CD8-positive, alpha-beta T cell (primary cell): ENCODE measurements at regions of chr2 and their contacts with region 1.

Region 1: GRCh38 chr2:8681786-8682692 is at the start of gene ID2:
- DNase-seq: peak; percentile 96 to 100 (median 99)
- ATAC-seq: peak; percentile 74
- H3K4me3 ChIP-seq: peak within 1 kb of the TSS; percentile 89 to 94
- H3K4me3 Mint-ChIP-seq: peak within 1 kb of the TSS; percentile 99
- H3K27ac ChIP-seq: peak within 1 kb of the TSS; percentile 80 to 82
- H3K27ac Mint-ChIP-seq: peak within 1 kb of the TSS; percentile 97
- H3K4me1 ChIP-seq: peaks cover 40% of the 10 kb centered on the region
- H3K4me1 Mint-ChIP-seq: peaks cover 45% of the 10 kb centered on the region
- H3K27me3 ChIP-seq: peaks cover 3 to 9% of the 10 kb centered on the region in 2 experiments
- H3K27me3 Mint-ChIP-seq: peaks cover 15% of the 10 kb centered on the region
- CTCF ChIP-seq: no peak
- total RNA-seq, gene ID2: 290 to 298 TPM

Region 2: GRCh38 chr2:7097348-7097895 is 1584.6 kb before region 1 on chr2:
- CTCF ChIA-PET with region 1: interaction called, 7 read pairs
- POLR2A ChIA-PET with region 1: interaction called, 3 read pairs
- intact Hi-C with region 1: loop called in 1 of 2 experiments (anchors 1 kb)
- DNase-seq: peak; percentile 60 to 87 (median 74)
- ATAC-seq: peak; percentile 90
- H3K4me3 ChIP-seq: peak overlapping the region; percentile 35 to 51
- H3K4me3 Mint-ChIP-seq: peak overlapping the region; percentile 78
- H3K27ac ChIP-seq: no peak overlapping the region
- H3K27ac Mint-ChIP-seq: no peak overlapping the region
- H3K4me1 ChIP-seq: peaks cover 6% of the 10 kb centered on the region
- H3K4me1 Mint-ChIP-seq: peaks cover 4% of the 10 kb centered on the region
- H3K27me3 ChIP-seq: no peaks in the 10 kb centered on the region
- H3K27me3 Mint-ChIP-seq: no peaks in the 10 kb centered on the region
- CTCF ChIP-seq: peak; percentile 99

Region 3: DNA sequence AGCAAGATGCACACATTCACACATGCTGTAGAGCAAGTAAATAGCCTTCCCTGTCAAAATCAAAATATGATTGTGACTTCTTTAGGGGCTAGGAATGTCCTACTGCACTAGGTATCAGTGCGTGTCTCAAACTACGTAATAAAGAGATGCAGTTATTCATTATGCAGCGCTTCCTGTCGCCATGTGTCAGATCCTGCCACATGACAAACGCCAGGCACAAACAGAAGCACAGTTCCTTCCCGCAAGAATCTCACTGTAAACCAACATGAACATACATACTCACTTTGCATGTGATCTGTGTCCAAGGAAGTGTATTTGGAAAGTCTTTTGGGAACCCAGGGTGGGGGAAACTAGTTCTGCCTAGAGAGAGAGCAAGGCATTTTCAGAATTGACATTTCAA is 1165.0 kb before region 1 on chr2:
- CTCF ChIA-PET with region 1: no interaction called
- POLR2A ChIA-PET with region 1: no interaction called
- intact Hi-C with region 1: loop called in 1 of 2 experiments (anchors 5 kb)
- DNase-seq: peak in 8 of 9 experiments; percentile 4 to 83 (median 50)
- ATAC-seq: peak; percentile 95
- H3K4me3 ChIP-seq: peak overlapping the region in 1 of 2 experiments; percentile 23
- H3K4me3 Mint-ChIP-seq: peak overlapping the region; percentile 69
- H3K27ac ChIP-seq: peak overlapping the region; percentile 44 to 61
- H3K27ac Mint-ChIP-seq: peak overlapping the region; percentile 93
- H3K4me1 ChIP-seq: peaks cover 48% of the 10 kb centered on the region
- H3K4me1 Mint-ChIP-seq: peaks cover 58% of the 10 kb centered on the region
- H3K27me3 ChIP-seq: no peaks in the 10 kb centered on the region
- H3K27me3 Mint-ChIP-seq: no peaks in the 10 kb centered on the region
- CTCF ChIP-seq: no peak

Region 4: DNA sequence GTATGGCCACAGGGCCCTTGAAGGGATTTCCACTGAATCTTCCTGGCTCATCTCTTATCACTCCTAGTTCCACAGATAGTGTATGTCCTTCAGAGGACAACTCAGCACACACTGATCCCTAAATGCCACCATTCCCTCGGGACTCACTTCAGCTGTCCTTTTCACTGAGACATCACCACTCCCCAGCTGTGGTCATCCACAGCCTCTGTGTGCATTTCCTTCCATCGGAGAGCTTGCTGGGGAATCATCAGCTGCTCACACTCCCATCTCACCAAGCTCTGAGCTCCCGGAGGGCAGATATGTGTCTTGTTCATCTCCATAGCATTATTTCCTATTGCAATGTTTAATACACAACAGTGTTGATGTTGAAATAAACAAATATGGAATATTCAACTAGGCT is 1005.3 kb before region 1 on chr2:
- CTCF ChIA-PET with region 1: no interaction called
- POLR2A ChIA-PET with region 1: no interaction called
- intact Hi-C with region 1: no loop called
- DNase-seq: no peak
- ATAC-seq: no peak
- H3K4me3 ChIP-seq: no peak overlapping the region
- H3K4me3 Mint-ChIP-seq: no peak overlapping the region
- H3K27ac ChIP-seq: no peak overlapping the region
- H3K27ac Mint-ChIP-seq: no peak overlapping the region
- H3K4me1 ChIP-seq: peaks cover 18% of the 10 kb centered on the region
- H3K4me1 Mint-ChIP-seq: peaks cover 26% of the 10 kb centered on the region
- H3K27me3 ChIP-seq: no peaks in the 10 kb centered on the region
- H3K27me3 Mint-ChIP-seq: no peaks in the 10 kb centered on the region
- CTCF ChIP-seq: no peak

Region 5: DNA sequence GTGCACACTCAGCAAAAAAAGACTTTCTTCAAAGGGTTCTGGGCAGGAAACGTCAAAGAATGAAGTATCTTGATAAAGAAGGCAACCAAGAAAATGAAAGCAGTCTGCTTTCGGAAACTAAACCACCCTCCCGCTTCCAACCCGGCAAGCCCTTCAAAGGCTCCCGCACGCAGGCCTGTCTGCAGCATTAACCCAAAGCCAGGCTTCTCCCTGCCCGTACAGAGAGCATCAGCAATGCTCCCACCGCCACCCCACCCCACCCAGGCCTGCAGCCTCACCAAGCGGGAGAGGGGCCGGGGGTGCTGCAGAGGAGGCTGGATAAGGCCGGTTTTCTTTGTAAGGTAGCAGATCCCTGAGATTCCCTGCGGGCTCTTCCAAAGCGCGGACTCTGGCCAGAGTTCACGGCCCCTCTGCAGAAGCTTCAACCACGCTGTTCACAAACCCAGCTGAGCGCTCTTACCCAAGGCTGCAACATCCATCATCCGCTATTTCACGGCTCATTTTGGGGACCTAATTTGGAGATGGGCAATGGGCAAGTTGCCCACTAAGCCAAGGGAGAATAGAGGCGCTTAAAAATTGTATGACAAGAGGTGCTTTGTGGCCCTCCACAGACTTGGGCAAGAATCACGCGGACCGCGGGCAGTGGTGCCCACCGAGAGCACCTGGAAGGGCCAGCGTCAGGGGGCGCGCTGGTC is 225.7 kb before region 1 on chr2:
- CTCF ChIA-PET with region 1: no interaction called
- POLR2A ChIA-PET with region 1: interaction called, 3 read pairs
- intact Hi-C with region 1: loop called (anchors 2 to 5 kb)
- DNase-seq: peak in 7 of 9 experiments; percentile 32 to 77 (median 59)
- ATAC-seq: peak; percentile 70
- H3K4me3 ChIP-seq: peak overlapping the region; percentile 36 to 40
- H3K4me3 Mint-ChIP-seq: peak overlapping the region; percentile 86
- H3K27ac ChIP-seq: peak overlapping the region in 1 of 2 experiments; percentile 80
- H3K27ac Mint-ChIP-seq: peak overlapping the region; percentile 86
- H3K4me1 ChIP-seq: peaks cover 20% of the 10 kb centered on the region
- H3K4me1 Mint-ChIP-seq: peaks cover 29% of the 10 kb centered on the region
- H3K27me3 ChIP-seq: no peaks in the 10 kb centered on the region
- H3K27me3 Mint-ChIP-seq: peaks cover 16% of the 10 kb centered on the region
- CTCF ChIP-seq: no peak

Region 6: DNA sequence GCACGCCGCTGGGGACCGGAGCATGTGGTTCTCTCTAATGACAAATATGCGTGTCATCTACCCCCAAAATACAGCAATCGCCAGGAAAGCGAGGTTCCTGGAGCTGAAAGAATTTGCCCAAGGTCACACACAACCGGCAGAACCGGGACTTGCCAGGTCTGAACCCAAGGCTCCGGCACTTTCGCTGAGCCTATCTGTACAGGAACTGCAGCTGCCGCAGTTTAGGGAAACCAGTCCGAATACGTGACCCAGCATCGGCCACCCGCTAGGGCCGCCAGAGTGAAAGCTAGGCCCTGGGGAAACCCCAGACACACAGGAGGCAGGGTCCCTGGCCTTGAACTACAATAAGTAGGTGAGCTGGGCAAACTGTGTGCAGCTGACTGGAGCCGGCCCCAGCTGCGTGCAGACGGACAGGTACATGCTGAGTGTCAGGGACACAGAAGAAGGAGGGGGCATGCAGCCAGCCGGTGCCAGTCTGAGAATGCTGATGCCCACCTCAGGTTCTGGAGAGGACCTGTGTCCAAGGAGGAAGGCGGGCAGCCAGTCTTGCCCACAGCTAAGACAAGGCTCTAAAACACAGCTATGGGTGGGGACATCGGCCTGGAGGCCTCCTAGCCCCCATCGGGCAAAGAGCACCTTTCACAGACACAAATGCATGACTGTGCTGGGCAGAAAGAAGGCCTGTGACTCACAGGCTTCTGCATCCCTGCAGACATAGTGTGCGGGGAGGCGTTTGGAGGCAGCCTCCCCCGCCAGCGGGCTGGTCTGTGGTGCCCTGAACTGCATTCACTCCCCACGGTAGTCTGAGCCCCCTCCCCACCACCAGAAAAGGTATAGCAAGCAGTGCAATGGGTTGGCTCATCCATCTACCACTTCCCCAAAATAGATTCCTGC is 107.6 kb before region 1 on chr2:
- CTCF ChIA-PET with region 1: interaction called, 5 read pairs
- POLR2A ChIA-PET with region 1: interaction called, 5 read pairs
- intact Hi-C with region 1: loop called (anchors 2 to 5 kb)
- DNase-seq: peak in 4 of 9 experiments; percentile 10 to 48 (median 37)
- ATAC-seq: no peak
- H3K4me3 ChIP-seq: no peak overlapping the region
- H3K4me3 Mint-ChIP-seq: peak overlapping the region; percentile 32
- H3K27ac ChIP-seq: no peak overlapping the region
- H3K27ac Mint-ChIP-seq: no peak overlapping the region
- H3K4me1 ChIP-seq: peaks cover 26% of the 10 kb centered on the region
- H3K4me1 Mint-ChIP-seq: peaks cover 30% of the 10 kb centered on the region
- H3K27me3 ChIP-seq: no peaks in the 10 kb centered on the region
- H3K27me3 Mint-ChIP-seq: peaks cover 15% of the 10 kb centered on the region
- CTCF ChIP-seq: no peak

Region 7: GRCh38 chr2:8729939-8730338 is 47.9 kb after region 1 on chr2:
- CTCF ChIA-PET with region 1: no interaction called
- POLR2A ChIA-PET with region 1: no interaction called
- intact Hi-C with region 1: no loop called
- DNase-seq: no peak
- ATAC-seq: no peak
- H3K4me3 ChIP-seq: no peak overlapping the region
- H3K4me3 Mint-ChIP-seq: no peak overlapping the region
- H3K27ac ChIP-seq: no peak overlapping the region
- H3K27ac Mint-ChIP-seq: no peak overlapping the region
- H3K4me1 ChIP-seq: no peaks in the 10 kb centered on the region
- H3K4me1 Mint-ChIP-seq: no peaks in the 10 kb centered on the region
- H3K27me3 ChIP-seq: no peaks in the 10 kb centered on the region
- H3K27me3 Mint-ChIP-seq: no peaks in the 10 kb centered on the region
- CTCF ChIP-seq: no peak

Region 8: GRCh38 chr2:9003616-9004337 is 321.7 kb after region 1 on chr2 and contains the start of gene MBOAT2:
- CTCF ChIA-PET with region 1: no interaction called
- POLR2A ChIA-PET with region 1: no interaction called
- intact Hi-C with region 1: loop called in 1 of 2 experiments (anchors 2 kb)
- DNase-seq: peak; percentile 39 to 88 (median 71)
- ATAC-seq: peak; percentile 88
- H3K4me3 ChIP-seq: peak within 1 kb of the TSS; percentile 53 to 69
- H3K4me3 Mint-ChIP-seq: peak within 1 kb of the TSS; percentile 83
- H3K27ac ChIP-seq: peak within 1 kb of the TSS in 1 of 2 experiments; percentile 18
- H3K27ac Mint-ChIP-seq: peak within 1 kb of the TSS; percentile 60
- H3K4me1 ChIP-seq: peaks cover 9% of the 10 kb centered on the region
- H3K4me1 Mint-ChIP-seq: peaks cover 16% of the 10 kb centered on the region
- H3K27me3 ChIP-seq: no peaks in the 10 kb centered on the region
- H3K27me3 Mint-ChIP-seq: peaks cover 5% of the 10 kb centered on the region
- CTCF ChIP-seq: no peak
- total RNA-seq, gene MBOAT2: 0.54 to 1.1 TPM